ENCODE measurements at regions of chr6 and their contacts with region 1.

Region 1: DNA sequence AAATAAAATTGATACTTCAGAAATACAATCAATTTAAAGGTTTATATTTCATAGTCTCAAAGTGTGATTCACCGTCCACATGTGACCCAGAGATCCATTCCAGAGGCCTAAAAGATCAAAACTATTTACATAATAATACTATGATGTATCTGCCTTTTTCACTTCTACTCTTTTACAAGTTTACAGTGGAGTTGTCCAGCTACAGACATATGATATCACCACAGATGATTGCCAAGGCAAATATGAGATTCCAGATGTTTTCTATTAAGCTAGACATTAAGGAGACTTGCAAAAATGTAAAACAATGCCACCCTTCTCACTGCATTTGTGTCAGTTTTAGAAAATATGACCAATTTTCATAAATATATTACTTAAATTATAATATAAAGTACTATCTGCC is 443.7 kb downstream of the GJA1 start:
- DNase-seq: no peak
- ATAC-seq: no peak
- H3K4me3 ChIP-seq: no peak overlapping the region
- H3K27ac ChIP-seq: no peak overlapping the region
- H3K4me1 ChIP-seq: no peaks in the 10 kb centered on the region
- H3K27me3 ChIP-seq: no peaks in the 10 kb centered on the region

Region 2: GRCh38 chr6:121857551-121857950 is 21.6 kb before region 1 on chr6:
- intact Hi-C with region 1: no loop called
- DNase-seq: no peak
- ATAC-seq: no peak
- H3K4me3 ChIP-seq: no peak overlapping the region
- H3K27ac ChIP-seq: no peak overlapping the region
- H3K4me1 ChIP-seq: peaks cover 1% of the 10 kb centered on the region
- H3K27me3 ChIP-seq: no peaks in the 10 kb centered on the region

Region 3: DNA sequence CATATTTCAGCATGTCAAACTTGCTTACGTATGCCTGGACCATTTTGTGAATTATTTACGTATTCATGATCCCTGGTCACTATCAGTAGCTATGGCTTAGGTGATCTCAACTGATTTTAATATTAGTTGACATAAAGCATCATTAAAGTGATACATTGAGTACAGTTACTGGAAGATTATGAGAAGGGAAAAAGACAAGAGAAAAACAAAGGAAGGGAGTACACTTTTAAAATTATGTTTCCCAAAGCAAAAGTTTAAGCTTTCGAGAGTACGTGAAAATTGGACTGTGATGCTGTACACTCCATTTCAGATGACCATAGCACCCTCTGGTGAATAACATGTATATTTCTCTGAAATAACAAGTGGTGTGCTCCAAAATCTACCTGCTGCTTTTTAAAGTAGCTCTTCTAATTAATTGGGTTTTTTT is 305.3 kb after region 1 on chr6:
- intact Hi-C with region 1: loop called in 1 of 4 experiments (anchors 10 kb)
- DNase-seq: no peak
- ATAC-seq: peak; percentile 63 to 75
- H3K4me3 ChIP-seq: peak overlapping the region; percentile 48
- H3K27ac ChIP-seq: no peak overlapping the region
- H3K4me1 ChIP-seq: no peaks in the 10 kb centered on the region
- H3K27me3 ChIP-seq: no peaks in the 10 kb centered on the region

Measured in right cardiac atrium (tissue), 5 donors.